Gastrocnemius medialis (tissue), 4 donors: ENCODE measurements at regions of chr19 and their contacts with region 1.

Region 1: GRCh38 chr19:40640744-40641143 is 39.6 kb downstream of the LTBP4 start:
- DNase-seq: no peak
- ATAC-seq: no peak
- H3K4me3 ChIP-seq: no peak overlapping the region
- H3K27ac ChIP-seq: peak overlapping the region in 2 of 4 donors; percentile 24 to 29
- H3K4me1 ChIP-seq: no peaks in the 10 kb centered on the region
- H3K27me3 ChIP-seq: no peaks in the 10 kb centered on the region
- CTCF ChIP-seq: no peak
- POLR2A ChIP-seq: no peak

Region 2: DNA sequence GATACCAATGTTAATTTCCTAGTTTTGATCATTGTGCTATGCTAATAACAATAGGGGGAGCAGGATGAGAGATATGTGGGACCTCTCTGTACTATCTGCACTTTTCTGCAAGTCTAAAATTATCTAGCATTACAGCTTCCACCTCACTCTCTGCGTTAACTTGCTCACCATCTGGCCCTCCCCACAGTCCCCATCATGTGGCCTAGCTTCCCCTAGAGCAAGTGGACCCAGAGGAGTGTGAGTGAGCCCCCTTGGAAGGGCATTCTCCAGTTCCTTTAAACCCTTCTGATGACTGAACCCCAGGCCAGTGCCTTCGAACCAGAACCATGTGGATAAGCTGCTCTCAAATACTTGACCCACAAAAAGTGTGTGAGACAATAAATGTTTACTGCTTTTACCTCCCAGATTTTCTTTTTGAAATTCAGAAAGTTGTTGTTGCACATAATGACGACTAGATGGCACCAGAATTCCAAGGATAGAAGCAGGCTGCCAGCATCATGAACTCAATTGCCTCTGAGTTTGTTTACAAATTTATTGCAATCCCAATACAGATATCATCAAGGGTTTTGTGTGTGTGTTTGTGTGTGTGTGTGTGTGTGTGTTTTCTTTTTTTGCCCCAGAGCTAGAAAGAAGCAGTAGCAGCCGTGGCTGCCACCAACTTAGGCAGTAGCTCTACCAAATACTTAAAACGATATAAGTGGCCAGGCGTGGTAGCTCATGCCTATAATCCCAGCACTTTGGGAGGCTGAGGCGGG is 501.0 kb before region 1 on chr19:
- in situ Hi-C with region 1: loop called in 1 of 4 experiments (anchors 25 kb)
- intact Hi-C with region 1: loop called (anchors 5 kb)
- DNase-seq: no peak
- ATAC-seq: peak in 1 of 2 donors; percentile 50
- H3K4me3 ChIP-seq: no peak overlapping the region
- H3K27ac ChIP-seq: no peak overlapping the region
- H3K4me1 ChIP-seq: no peaks in the 10 kb centered on the region
- H3K27me3 ChIP-seq: peaks cover 0 to 12% (median 2%) of the 10 kb centered on the region in 3 donors
- CTCF ChIP-seq: peak; percentile 37 to 66 (median 62)
- POLR2A ChIP-seq: no peak

Region 3: GRCh38 chr19:40529093-40529954 is 111.4 kb before region 1 on chr19:
- in situ Hi-C with region 1: no loop called
- intact Hi-C with region 1: loop called (anchors 2 kb)
- DNase-seq: peak; percentile 50 to 71
- ATAC-seq: peak; percentile 89 to 91
- H3K4me3 ChIP-seq: peak overlapping the region; percentile 59 to 69 (median 60)
- H3K27ac ChIP-seq: peak overlapping the region in 1 of 4 donors; percentile 27
- H3K4me1 ChIP-seq: peaks cover 0 to 4% of the 10 kb centered on the region in 2 donors
- H3K27me3 ChIP-seq: no peaks in the 10 kb centered on the region
- CTCF ChIP-seq: peak; percentile 93 to 98 (median 95)
- POLR2A ChIP-seq: no peak

Region 4: GRCh38 chr19:40549007-40549708 is 91.6 kb before region 1 on chr19:
- in situ Hi-C with region 1: loop called in 1 of 4 experiments (anchors 5 kb)
- intact Hi-C with region 1: no loop called
- DNase-seq: no peak
- ATAC-seq: no peak
- H3K4me3 ChIP-seq: no peak overlapping the region
- H3K27ac ChIP-seq: no peak overlapping the region
- H3K4me1 ChIP-seq: no peaks in the 10 kb centered on the region
- H3K27me3 ChIP-seq: peaks cover 0 to 6% (median 3%) of the 10 kb centered on the region in 3 donors
- CTCF ChIP-seq: peak in 3 of 5 experiments; percentile 27 to 60 (median 54)
- POLR2A ChIP-seq: no peak

Region 5: DNA sequence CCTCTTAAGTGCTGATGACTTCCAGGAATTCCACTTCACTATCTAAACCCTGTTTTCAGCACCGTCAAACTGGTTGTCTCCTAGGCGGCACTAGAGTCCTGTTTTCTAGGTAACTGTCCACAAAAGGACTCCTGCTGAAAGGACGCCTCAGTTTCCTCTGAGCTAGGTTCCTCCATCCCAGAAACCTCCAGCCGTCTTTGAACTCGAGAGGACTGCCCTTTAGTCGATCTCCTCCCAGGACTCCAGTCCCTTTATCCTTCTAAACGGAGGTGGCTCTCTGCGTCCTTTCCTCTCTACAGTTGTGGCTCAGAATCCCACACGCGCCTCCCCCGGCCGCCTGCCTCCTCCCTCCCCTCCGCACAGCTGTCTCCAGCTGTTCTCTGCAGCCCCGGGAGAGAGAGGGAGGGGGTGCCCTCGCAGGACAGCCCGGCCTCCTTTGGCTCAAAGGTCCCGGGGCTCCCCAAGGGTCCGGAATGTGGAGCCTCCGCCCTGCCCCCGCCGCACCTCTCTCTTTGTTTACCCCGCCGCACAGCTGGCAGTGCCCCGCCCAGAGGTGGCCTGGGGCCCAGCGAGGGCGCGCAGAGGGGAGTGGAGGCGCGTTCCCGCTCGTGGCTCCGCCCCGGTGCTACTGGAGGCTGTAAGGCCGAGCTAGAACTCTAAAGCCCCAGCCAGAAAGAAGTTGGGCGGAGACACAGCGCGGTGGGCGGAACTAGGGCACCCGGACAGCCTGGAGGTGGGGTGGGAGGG is 37.2 kb before region 1 on chr19:
- in situ Hi-C with region 1: no loop called
- intact Hi-C with region 1: loop called (anchors 2 kb)
- DNase-seq: peak; percentile 95 to 97
- ATAC-seq: peak; percentile 84 to 85
- H3K4me3 ChIP-seq: peak overlapping the region; percentile 47 to 80 (median 54)
- H3K27ac ChIP-seq: peak overlapping the region; percentile 73 to 84 (median 78)
- H3K4me1 ChIP-seq: peaks cover 31 to 38% of the 10 kb centered on the region in 2 donors
- H3K27me3 ChIP-seq: peaks cover 19 to 30% (median 21%) of the 10 kb centered on the region in 3 donors
- CTCF ChIP-seq: no peak
- POLR2A ChIP-seq: peak; percentile 57 to 81

Region 6: GRCh38 chr19:40777937-40778705 is 137.4 kb after region 1 on chr19 and contains the start of gene RAB4B:
- in situ Hi-C with region 1: no loop called
- intact Hi-C with region 1: no loop called
- DNase-seq: peak; percentile 100
- ATAC-seq: peak; percentile 92
- H3K4me3 ChIP-seq: peak within 1 kb of the TSS; percentile 79 to 93 (median 89)
- H3K27ac ChIP-seq: peak within 1 kb of the TSS; percentile 93 to 99 (median 98)
- H3K4me1 ChIP-seq: peaks cover 7 to 14% of the 10 kb centered on the region in 2 donors
- H3K27me3 ChIP-seq: no peaks in the 10 kb centered on the region
- CTCF ChIP-seq: peak in 2 of 5 experiments; percentile 25 to 27
- POLR2A ChIP-seq: peak; percentile 76 to 81
- total RNA-seq, gene RAB4B: 14.9 to 27.2 (median 19.7) TPM